Right cardiac atrium (tissue), 5 donors: ENCODE measurements at regions of chr3 and their contacts with region 1.

Region 1: DNA sequence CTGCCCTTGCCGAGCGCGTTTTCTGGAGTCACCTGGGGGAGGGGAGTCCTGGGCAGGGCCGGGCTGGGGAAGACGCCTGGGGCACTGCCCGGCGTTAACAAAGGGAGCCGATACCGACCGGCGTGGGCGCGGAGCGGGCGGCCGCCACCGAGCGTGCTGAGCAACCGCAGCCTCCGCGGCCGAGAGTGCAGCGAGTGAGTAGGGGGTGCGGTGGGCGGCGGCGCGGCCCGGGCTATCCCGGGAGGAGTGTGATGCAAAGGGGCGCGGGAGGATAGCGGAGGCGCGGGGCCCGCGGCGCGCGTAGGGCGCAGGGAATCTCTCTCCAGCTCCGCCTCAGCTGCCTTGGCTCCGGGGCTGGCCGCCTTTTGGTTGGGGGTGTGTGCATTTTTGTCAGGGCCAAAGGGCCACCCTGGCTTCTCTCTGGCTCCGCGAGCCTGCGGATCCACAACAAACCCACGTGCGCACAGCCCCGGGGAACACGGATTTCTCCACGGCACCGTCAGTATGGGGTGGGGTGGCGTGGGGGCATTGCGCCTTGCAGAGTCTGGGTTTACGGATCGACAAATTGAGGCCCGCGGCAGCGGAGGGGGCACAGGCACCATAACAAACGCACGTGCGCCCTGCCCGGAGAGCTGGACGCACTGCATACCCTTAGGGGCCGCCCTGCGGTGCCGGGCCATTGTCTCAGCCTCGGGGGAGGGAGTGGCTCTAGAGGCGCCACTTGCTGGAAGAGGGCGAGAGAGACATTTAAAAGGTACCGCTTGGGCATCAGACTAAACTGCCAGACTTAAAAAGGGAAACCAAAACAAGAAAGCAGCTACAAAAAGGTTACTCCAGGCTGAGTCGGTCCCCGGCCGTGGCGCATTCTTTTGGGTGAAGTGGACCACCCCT is 560 bp downstream of the ST6GAL1 start:
- DNase-seq: peak; percentile 77 to 87 (median 87)
- ATAC-seq: peak; percentile 77 to 83
- H3K4me3 ChIP-seq: peak overlapping the region; percentile 80
- H3K27ac ChIP-seq: peak overlapping the region; percentile 94
- H3K4me1 ChIP-seq: peaks cover 12% of the 10 kb centered on the region
- H3K27me3 ChIP-seq: no peaks in the 10 kb centered on the region

Region 2: DNA sequence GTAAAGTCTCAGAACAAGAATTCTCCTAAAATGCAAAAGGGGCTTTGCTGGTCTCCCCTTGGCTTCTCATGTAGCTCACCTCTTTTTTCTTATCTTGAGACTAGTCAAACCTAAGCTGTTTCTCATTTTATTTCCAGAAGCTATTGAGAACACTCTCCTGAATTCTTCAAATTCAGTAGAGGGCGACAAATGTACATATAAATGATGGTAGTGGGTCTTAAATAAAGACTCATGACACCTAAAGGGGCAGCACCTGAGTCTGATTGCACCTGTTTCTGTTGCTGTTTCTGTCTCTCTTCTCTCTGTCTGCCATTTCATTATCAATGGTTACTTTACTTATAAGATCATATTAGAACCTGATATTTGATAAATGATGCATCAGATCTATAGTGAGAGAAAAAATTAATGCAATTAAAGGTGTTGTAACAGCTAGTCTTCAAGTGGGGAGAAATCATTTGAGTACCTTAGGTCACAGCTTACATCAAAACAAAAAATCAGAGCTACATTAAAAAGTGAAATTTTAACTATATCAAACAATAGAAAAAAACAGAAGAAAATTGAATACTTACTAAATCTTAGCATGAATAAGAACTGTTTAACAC is 81.4 kb before region 1 on chr3:
- intact Hi-C with region 1: loop called in 1 of 4 experiments (anchors 5 kb)
- DNase-seq: no peak
- ATAC-seq: peak in 1 of 2 donors; percentile 67
- H3K4me3 ChIP-seq: no peak overlapping the region
- H3K27ac ChIP-seq: no peak overlapping the region
- H3K4me1 ChIP-seq: no peaks in the 10 kb centered on the region
- H3K27me3 ChIP-seq: no peaks in the 10 kb centered on the region

Region 3: GRCh38 chr3:186976837-186977750 is 46.2 kb after region 1 on chr3:
- intact Hi-C with region 1: loop called in 2 of 4 experiments (anchors 5 kb)
- DNase-seq: peak; percentile 84 to 90 (median 85)
- ATAC-seq: peak; percentile 91 to 94
- H3K4me3 ChIP-seq: no peak overlapping the region
- H3K27ac ChIP-seq: peak overlapping the region; percentile 96
- H3K4me1 ChIP-seq: peaks cover 14% of the 10 kb centered on the region
- H3K27me3 ChIP-seq: no peaks in the 10 kb centered on the region

Region 4: GRCh38 chr3:187016639-187017345 is 85.9 kb after region 1 on chr3:
- intact Hi-C with region 1: loop called in 1 of 4 experiments (anchors 10 kb)
- DNase-seq: peak in 1 of 3 donors; percentile 26
- ATAC-seq: peak; percentile 67 to 88
- H3K4me3 ChIP-seq: no peak overlapping the region
- H3K27ac ChIP-seq: no peak overlapping the region
- H3K4me1 ChIP-seq: peaks cover 19% of the 10 kb centered on the region
- H3K27me3 ChIP-seq: no peaks in the 10 kb centered on the region

Region 5: DNA sequence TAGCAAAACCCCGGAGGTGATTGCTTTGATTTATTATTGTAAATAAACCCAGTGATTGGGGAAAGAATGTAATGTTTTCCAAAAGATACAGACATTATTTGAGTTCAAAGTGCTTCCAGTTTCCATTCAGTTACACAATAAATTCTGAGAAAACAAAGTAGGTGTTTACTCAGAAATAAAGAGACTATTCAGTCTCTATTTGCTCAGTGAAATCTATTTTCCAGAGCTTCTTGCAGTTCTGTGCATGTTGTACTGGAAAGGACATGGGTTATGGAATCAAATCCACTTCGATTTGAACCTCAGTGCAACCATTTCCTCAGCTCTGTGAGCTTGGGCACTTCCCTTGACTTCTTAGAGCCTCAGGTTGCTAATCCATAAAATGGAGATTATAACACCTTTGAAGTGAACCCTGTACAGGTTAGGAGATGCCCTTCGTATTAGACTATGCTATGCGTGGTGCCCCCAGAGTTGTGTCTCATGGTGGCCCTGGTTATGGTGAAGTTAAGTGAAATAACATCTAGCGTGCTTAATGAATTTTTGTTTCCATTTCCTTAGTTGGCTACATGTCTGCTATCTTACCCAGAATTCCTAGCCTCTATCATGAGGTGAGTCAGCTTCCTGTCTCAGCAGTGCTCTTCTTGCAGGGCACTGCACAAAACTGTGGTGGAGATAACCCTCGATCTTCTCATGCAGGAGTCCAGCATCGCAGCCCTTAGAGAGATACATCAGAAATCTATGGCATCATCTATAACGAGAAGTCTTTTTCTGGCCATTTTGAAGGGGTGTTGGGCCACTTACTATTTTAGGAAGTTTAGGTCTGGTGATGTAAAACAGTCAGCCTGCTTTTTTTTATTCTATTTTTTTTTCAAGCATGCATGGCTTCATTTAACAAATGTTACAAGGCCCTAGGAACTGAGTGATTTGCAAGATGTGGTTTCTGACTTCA is 110.7 kb after region 1 on chr3:
- intact Hi-C with region 1: loop called in 1 of 4 experiments (anchors 10 kb)
- DNase-seq: no peak
- ATAC-seq: peak; percentile 61 to 83
- H3K4me3 ChIP-seq: no peak overlapping the region
- H3K27ac ChIP-seq: peak overlapping the region; percentile 53
- H3K4me1 ChIP-seq: peaks cover 14% of the 10 kb centered on the region
- H3K27me3 ChIP-seq: no peaks in the 10 kb centered on the region

Region 6: GRCh38 chr3:187101184-187102072 is 170.5 kb after region 1 on chr3:
- intact Hi-C with region 1: loop called in 1 of 4 experiments (anchors 10 kb)
- DNase-seq: peak; percentile 87 to 92 (median 91)
- ATAC-seq: peak; percentile 87 to 88
- H3K4me3 ChIP-seq: peak overlapping the region; percentile 12
- H3K27ac ChIP-seq: peak overlapping the region; percentile 54
- H3K4me1 ChIP-seq: peaks cover 10% of the 10 kb centered on the region
- H3K27me3 ChIP-seq: no peaks in the 10 kb centered on the region